PC-9 (cell line): ENCODE measurements at regions of chr5 and their contacts with region 1.

Region 1: GRCh38 chr5:29796013-29796412 is 1397.5 kb upstream of the CDH6 start:
- DNase-seq: peak in 1 of 2 experiments; percentile 21
- H3K4me3 ChIP-seq: no peak overlapping the region
- H3K27ac ChIP-seq: peak overlapping the region; percentile 6; the same call in 1 of the 2 replicates
- H3K4me1 ChIP-seq: no peaks in the 10 kb centered on the region
- H3K27me3 ChIP-seq: no peaks in the 10 kb centered on the region
- CTCF ChIP-seq: no peak

Region 2: DNA sequence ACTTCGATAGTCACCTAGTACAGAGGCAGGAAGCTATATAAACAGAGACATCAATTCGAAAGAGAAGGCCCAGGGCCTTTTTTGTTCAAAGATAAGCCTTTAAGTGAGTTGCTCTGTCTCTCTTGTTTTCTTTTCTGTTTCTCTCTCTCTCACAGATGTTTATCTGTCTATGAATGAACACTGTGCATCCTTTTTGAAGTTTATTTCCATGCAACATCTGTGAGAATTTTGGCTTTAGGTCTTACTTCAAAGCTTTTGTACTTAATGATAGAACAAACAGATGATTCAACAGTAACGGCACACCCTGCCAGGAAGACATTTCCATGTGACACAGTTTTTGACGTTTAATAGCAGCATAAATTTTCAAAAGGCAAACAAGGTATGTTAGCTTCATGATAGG is 15.6 kb before region 1 on chr5:
- CTCF ChIA-PET with region 1: interaction called, 13 read pairs
- POLR2A ChIA-PET with region 1: no interaction called
- intact Hi-C with region 1: no loop called
- DNase-seq: no peak
- H3K4me3 ChIP-seq: no peak overlapping the region
- H3K27ac ChIP-seq: no peak overlapping the region
- H3K4me1 ChIP-seq: no peaks in the 10 kb centered on the region
- H3K27me3 ChIP-seq: no peaks in the 10 kb centered on the region
- CTCF ChIP-seq: no peak